Esophagus squamous epithelium (tissue), 5 donors: ENCODE measurements at regions of chr11 and their contacts with region 1.

Region 1: DNA sequence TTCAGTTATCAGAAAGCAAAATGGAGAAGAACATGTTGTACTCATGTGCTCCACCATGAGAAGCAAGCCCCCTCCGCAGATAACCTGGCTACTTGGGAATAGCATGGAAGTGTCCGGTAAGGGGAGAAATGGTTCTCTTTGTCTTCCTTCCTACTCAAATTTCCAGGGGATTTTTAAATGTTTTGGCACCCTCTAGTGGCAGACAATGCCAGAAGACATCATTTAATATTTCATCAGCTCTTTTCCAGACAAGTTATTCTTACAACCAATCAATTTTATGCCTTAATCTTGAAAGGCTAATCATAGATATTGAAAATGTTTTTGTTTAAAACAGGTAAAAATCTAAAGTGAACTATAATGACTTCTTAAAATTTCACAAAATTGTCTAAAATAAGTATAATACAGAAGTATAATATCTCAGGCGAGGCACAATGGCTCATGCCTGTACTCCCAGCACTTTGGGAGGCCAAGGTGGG is 15.7 kb downstream of the CRTAM start:
- DNase-seq: no peak
- H3K4me3 ChIP-seq: no peak overlapping the region
- H3K27ac ChIP-seq: no peak overlapping the region
- H3K4me1 ChIP-seq: peaks cover 0 to 19% (median 0%) of the 10 kb centered on the region in 3 donors
- H3K27me3 ChIP-seq: peaks cover 0 to 5% (median 1%) of the 10 kb centered on the region in 4 donors
- CTCF ChIP-seq: peak; percentile 68 to 83 (median 76)
- POLR2A ChIP-seq: no peak

Region 2: GRCh38 chr11:122633219-122633829 is 220.7 kb before region 1 on chr11:
- intact Hi-C with region 1: loop called (anchors 5 kb)
- DNase-seq: no peak
- H3K4me3 ChIP-seq: no peak overlapping the region
- H3K27ac ChIP-seq: no peak overlapping the region
- H3K4me1 ChIP-seq: peaks cover 0 to 7% (median 0%) of the 10 kb centered on the region in 3 donors
- H3K27me3 ChIP-seq: peaks cover 0 to 7% (median 0%) of the 10 kb centered on the region in 4 donors
- CTCF ChIP-seq: peak in 4 of 6 experiments; percentile 32 to 66 (median 38)
- POLR2A ChIP-seq: no peak

Region 3: DNA sequence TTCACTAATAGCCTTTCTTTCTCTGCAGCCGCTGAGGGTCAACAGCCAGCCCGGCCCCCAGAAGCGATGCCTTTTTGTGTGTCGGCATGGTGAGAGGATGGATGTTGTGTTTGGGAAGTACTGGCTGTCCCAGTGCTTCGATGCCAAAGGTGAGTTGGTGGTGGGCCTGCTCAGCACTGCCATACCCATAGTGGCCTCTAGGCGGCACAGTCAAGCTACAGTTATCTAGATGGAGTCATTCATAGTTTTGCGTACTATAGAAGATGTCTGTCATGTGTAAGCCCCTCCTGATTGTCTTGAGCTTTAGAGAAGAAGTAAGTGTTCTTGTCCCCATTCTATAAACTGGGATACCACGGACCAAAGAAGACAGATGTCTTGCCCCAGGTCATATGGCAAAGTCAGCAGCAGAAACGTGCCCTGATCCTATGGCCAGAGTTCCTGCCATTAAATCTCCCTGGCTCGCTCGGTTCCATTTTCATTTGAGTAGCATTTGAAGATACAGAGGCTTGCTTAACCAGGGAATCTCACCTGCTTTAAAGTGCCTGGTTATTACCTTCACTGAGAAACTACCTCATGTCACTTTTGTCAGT is 57.8 kb before region 1 on chr11:
- intact Hi-C with region 1: loop called (anchors 5 kb)
- DNase-seq: no peak
- H3K4me3 ChIP-seq: no peak overlapping the region
- H3K27ac ChIP-seq: no peak overlapping the region
- H3K4me1 ChIP-seq: peaks cover 0 to 14% (median 5%) of the 10 kb centered on the region in 3 donors
- H3K27me3 ChIP-seq: no peaks in the 10 kb centered on the region
- CTCF ChIP-seq: peak; percentile 79 to 92 (median 88)
- POLR2A ChIP-seq: no peak